ENCODE measurements at regions of chr2 and their contacts with region 1.

Region 1: GRCh38 chr2:127072970-127073369 is 34.0 kb downstream of the BIN1 start:
- DNase-seq: no peak
- ATAC-seq: no peak

Region 2: DNA sequence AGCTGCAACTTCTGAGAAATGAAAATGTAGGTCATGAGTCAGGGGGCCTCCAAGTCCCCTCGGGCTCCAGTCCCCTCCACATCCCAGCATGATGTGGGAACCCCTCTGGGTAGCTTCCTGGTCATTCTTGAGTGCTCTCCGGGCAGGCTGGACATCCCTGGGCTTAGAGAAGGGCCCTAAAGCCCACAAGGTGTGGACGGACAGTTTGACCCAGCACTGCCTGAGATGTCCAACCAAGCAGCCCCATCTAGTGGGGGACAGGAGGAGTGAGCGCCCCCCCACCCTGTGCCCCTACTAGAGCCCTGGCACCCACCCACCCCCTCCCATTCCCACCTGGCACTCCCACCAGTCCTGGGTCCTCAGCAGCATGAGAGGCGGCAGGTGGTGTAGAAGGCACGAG is 101.2 kb after region 1 on chr2:
- intact Hi-C with region 1: loop called in 1 of 2 experiments (anchors 10 kb)
- DNase-seq: peak in 1 of 2 donors; percentile 29
- ATAC-seq: peak; percentile 35

Region 3: GRCh38 chr2:127197475-127198385 is 124.8 kb after region 1 on chr2:
- intact Hi-C with region 1: no loop called
- DNase-seq: peak; percentile 70 to 87
- ATAC-seq: peak; percentile 97

Region 4: DNA sequence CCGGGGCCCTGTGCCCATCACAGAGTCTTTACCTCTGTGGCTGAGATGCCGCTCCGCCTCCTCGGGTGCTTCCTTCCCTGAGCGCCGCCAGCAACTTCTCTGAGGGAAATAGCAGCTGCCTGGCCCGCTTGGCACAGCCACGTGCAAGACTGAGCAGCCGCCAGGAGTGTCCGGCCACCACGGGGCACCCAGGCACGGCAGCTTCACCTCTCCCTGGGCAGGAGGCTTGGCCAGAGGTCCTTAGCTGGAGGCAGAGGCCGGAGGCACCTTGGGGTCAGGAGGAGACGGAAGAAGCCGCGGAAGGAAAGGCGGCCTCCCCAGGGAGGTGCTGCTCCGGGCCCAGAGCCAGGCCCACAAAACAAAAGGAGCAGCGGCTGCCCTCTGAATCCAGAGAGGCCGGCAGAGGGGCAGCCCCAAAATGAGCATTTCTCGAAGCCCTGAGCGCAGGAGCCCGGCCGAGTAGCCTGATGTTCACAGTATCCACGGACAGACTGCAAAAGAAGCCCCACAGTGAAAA is 608.4 kb after region 1 on chr2:
- intact Hi-C with region 1: no loop called
- DNase-seq: no peak
- ATAC-seq: peak; percentile 16

Measured in left colon (tissue), 2 donors.